Activated CD4-positive, alpha-beta memory T cell treated with anti-CD3 and anti-CD28 coated beads for 36 hours (primary cell): ENCODE measurements at regions of chr17 and their contacts with region 1.

Region 1: GRCh38 chr17:42266918-42267778 is 9.0 kb downstream of the STAT5B start:
- DNase-seq: peak; percentile 66
- H3K4me3 Mint-ChIP-seq: peak overlapping the region; percentile 21
- H3K27ac Mint-ChIP-seq: peak overlapping the region; percentile 97
- H3K4me1 Mint-ChIP-seq: peaks cover 57% of the 10 kb centered on the region
- H3K27me3 Mint-ChIP-seq: no peaks in the 10 kb centered on the region

Region 2: GRCh38 chr17:42230225-42230624 is 36.9 kb before region 1 on chr17:
- CTCF ChIA-PET with region 1: no interaction called
- POLR2A ChIA-PET with region 1: no interaction called
- intact Hi-C with region 1: loop called (anchors 2 kb)
- DNase-seq: peak; percentile 48
- H3K4me3 Mint-ChIP-seq: no peak overlapping the region
- H3K27ac Mint-ChIP-seq: peak overlapping the region; percentile 46
- H3K4me1 Mint-ChIP-seq: peaks cover 47% of the 10 kb centered on the region
- H3K27me3 Mint-ChIP-seq: no peaks in the 10 kb centered on the region

Region 3: DNA sequence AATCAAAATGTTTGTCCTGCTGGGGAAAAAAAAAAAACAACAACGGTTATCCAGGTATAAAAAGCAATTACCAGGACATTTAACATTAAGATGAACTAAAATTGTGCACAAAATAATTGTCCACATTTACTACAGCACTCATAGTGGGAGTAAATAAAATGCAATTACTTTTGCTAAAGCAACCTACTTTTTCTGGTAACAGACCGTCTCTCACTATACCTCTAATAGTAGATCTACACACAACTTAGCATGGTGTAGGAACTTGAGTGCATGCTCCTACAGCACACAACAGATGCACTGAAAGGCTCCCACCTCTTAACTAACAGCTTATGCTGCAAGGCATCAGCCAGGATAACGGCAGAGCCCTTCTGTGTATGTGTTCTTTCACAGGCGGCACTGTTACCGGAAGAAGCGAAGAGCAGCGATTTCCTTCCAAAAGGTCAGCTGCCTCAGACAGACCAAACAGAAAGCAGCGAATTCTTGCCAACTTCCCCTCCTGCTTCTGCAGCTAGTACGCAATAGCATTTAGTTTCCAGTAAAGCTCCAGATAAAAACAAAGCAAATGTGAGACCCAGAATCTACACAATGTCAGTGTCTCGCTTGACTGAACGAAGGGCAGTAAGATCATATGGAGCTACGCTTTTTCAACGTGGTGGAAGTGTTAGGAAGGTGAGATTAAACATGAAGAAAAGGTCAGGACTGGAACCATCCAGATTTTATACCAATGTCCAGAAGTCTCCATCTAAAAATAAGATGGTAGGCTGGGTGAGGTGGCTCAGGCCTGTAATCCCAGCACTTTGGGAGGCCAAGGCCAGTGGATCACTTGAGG is 18.6 kb before region 1 on chr17:
- CTCF ChIA-PET with region 1: interaction called, 35 read pairs
- POLR2A ChIA-PET with region 1: interaction called, 271 read pairs
- intact Hi-C with region 1: loop called (anchors 1 kb)
- DNase-seq: peak; percentile 88
- H3K4me3 Mint-ChIP-seq: peak overlapping the region; percentile 73
- H3K27ac Mint-ChIP-seq: peak overlapping the region; percentile 95
- H3K4me1 Mint-ChIP-seq: peaks cover 68% of the 10 kb centered on the region
- H3K27me3 Mint-ChIP-seq: no peaks in the 10 kb centered on the region